Adrenal gland (tissue), 19 donors: ENCODE measurements at regions of chr6 and their contacts with region 1.

Region 1: GRCh38 chr6:37169496-37170272 is at the start of gene PIM1:
- DNase-seq: peak; percentile 99 to 100 (median 99)
- H3K4me3 ChIP-seq: peak within 1 kb of the TSS; percentile 79 to 96 (median 88)
- H3K27ac ChIP-seq: peak within 1 kb of the TSS; percentile 88 to 98 (median 95)
- H3K4me1 ChIP-seq: peaks cover 21 to 27% of the 10 kb centered on the region in 2 donors
- H3K27me3 ChIP-seq: no peaks in the 10 kb centered on the region
- CTCF ChIP-seq: no peak
- POLR2A ChIP-seq: peak; percentile 77 to 93
- total RNA-seq, gene PIM1: 2.8 to 36.6 (median 19.8) TPM

Region 2: DNA sequence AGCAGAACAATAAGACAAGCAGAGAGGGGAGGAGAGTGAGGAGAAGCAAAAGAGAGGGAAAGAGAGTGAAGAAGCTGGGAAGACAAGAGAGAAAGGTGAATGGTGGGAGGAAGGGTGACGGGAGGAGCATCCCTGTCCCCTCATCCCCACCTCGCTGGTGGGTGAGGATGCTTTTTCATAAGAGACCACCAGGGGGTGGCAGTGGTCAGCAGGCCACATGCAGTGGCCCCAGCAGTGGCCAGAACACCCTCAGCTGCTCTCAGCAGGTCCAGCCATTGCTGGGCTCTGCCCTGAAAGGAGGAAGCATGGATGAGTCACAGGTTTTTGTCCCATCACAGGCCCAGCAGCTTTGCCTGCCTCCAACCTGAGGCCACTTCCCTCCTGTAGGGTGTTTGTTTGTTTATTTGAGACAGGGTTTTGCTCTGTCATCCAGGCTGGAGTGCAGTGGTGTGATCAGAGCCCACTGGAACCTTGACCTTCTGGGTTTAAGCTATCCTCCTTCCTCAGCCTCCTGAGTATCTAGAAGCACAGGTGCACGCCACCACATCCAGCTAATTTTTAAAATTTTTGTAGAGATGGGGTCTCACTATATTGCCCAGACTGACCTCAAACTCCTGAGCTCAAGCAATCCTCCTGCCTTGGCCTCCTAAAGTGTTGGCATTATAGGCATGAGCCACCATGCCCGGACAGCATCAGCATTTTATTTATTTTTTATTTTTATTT is 140.3 kb before region 1 on chr6:
- intact Hi-C with region 1: loop called (anchors 10 kb)
- DNase-seq: peak; percentile 67 to 90 (median 85)
- H3K4me3 ChIP-seq: no peak overlapping the region
- H3K27ac ChIP-seq: no peak overlapping the region
- H3K4me1 ChIP-seq: no peaks in the 10 kb centered on the region
- H3K27me3 ChIP-seq: no peaks in the 10 kb centered on the region
- CTCF ChIP-seq: peak; percentile 50 to 90 (median 80)
- POLR2A ChIP-seq: no peak

Region 3: GRCh38 chr6:37051138-37052026 is 118.3 kb before region 1 on chr6:
- intact Hi-C with region 1: loop called (anchors 2 to 5 kb)
- DNase-seq: peak; percentile 85 to 97 (median 91)
- H3K4me3 ChIP-seq: no peak overlapping the region
- H3K27ac ChIP-seq: peak overlapping the region in 2 of 5 donors; percentile 8 to 76
- H3K4me1 ChIP-seq: peaks cover 0 to 18% of the 10 kb centered on the region in 2 donors
- H3K27me3 ChIP-seq: no peaks in the 10 kb centered on the region
- CTCF ChIP-seq: peak; percentile 78 to 98 (median 95)
- POLR2A ChIP-seq: no peak

Region 4: GRCh38 chr6:37059344-37060206 is 110.1 kb before region 1 on chr6:
- intact Hi-C with region 1: loop called in 1 of 2 experiments (anchors 5 kb)
- DNase-seq: peak; percentile 69 to 91 (median 86)
- H3K4me3 ChIP-seq: no peak overlapping the region
- H3K27ac ChIP-seq: peak overlapping the region; percentile 71 to 88 (median 85)
- H3K4me1 ChIP-seq: peaks cover 10 to 13% of the 10 kb centered on the region in 2 donors
- H3K27me3 ChIP-seq: no peaks in the 10 kb centered on the region
- CTCF ChIP-seq: peak; percentile 24 to 72 (median 64)
- POLR2A ChIP-seq: peak in 1 of 2 donors; percentile 45

Region 5: GRCh38 chr6:37207903-37208456 is 38.3 kb after region 1 on chr6:
- intact Hi-C with region 1: loop called in 1 of 2 experiments (anchors 2 kb)
- DNase-seq: peak; percentile 75 to 96 (median 87)
- H3K4me3 ChIP-seq: no peak overlapping the region
- H3K27ac ChIP-seq: no peak overlapping the region
- H3K4me1 ChIP-seq: peaks cover 0 to 9% of the 10 kb centered on the region in 2 donors
- H3K27me3 ChIP-seq: no peaks in the 10 kb centered on the region
- CTCF ChIP-seq: peak; percentile 60 to 92 (median 77)
- POLR2A ChIP-seq: no peak

Region 6: DNA sequence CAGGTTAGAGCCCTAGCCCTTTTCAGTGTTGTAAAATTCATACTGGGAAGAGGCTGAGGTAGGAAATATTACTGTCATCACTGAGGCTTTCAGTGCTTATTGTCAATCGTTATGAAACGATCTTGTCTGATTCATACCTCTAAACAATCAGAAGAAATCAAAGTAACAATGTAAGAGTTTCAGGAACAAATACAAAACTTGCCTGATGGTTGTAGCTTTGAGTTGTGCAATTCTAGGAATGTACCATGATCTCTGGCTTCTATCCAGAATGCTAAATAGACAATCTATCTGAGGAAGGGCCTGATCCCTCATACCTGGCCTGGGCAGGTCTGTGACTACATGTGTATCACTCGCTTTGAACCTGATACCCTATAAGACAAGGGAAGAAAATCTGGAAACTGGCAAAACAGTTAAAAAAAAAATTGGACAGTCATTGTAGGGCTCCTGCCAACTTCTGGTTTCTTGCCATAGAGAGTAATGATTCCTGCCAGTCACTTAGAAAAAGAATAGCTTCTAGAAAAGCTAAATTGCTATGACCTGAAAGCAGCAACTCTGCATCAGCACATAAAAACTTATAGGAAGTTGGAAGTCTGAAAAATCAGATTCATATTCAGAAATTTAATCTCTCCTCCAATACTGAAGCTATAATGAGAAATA is 1235.3 kb after region 1 on chr6:
- intact Hi-C with region 1: no loop called
- DNase-seq: no peak
- H3K4me3 ChIP-seq: no peak overlapping the region
- H3K27ac ChIP-seq: peak overlapping the region in 4 of 5 donors; percentile 34 to 49 (median 38)
- H3K4me1 ChIP-seq: peaks cover 21 to 30% of the 10 kb centered on the region in 2 donors
- H3K27me3 ChIP-seq: no peaks in the 10 kb centered on the region
- CTCF ChIP-seq: no peak
- POLR2A ChIP-seq: no peak